T-cell (primary cell): ENCODE measurements at regions of chr5 and their contacts with region 1.

Region 1: DNA sequence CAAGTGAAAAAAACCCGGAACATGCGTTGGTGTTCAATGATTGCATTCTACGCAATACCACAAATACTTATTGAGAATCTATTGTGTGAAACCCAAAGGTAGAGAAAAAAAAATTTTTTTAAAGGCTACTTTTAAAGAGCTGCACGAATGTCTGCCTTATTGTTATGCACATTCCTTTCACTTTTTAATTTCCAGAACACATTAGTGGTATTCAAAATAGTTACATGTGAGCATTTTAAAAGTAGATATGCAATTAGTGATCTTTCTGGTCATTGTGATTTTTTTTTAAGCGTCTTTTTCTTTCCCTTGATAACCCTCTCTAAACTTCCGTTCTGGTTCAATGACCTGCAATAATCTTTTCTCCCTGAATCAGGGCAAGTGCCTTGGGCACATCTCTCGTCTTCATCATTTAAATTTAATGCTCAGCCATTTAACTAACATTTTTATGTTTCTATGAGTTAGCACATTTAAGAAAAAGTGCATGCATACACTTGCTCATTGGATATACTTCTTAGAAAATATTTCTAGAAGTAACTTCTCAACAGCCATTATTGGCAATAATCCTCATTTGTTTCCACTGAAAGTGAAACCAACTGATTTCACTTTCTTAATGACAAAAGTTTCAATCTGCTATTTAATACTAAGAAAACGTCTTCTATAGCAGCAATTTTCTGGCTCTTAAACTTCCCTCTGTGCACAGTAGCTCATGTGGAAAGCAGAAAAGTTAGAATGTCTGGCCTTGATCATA is 80.3 kb downstream of the CDH6 start:
- DNase-seq: no peak
- ATAC-seq: no peak
- H3K4me3 ChIP-seq: no peak overlapping the region
- H3K4me3 Mint-ChIP-seq: no peak overlapping the region
- H3K27ac ChIP-seq: no peak overlapping the region
- H3K27ac Mint-ChIP-seq: no peak overlapping the region
- H3K4me1 ChIP-seq: no peaks in the 10 kb centered on the region
- H3K4me1 Mint-ChIP-seq: no peaks in the 10 kb centered on the region
- H3K27me3 ChIP-seq: peaks cover 0 to 3% of the 10 kb centered on the region in 2 experiments
- H3K27me3 Mint-ChIP-seq: no peaks in the 10 kb centered on the region

Region 2: GRCh38 chr5:31329715-31330114 is 55.9 kb after region 1 on chr5:
- CTCF ChIA-PET with region 1: no interaction called
- POLR2A ChIA-PET with region 1: interaction called in 1 of 2 experiments, 10 read pairs
- DNase-seq: no peak
- ATAC-seq: no peak
- H3K4me3 ChIP-seq: no peak overlapping the region
- H3K4me3 Mint-ChIP-seq: no peak overlapping the region
- H3K27ac ChIP-seq: no peak overlapping the region
- H3K27ac Mint-ChIP-seq: no peak overlapping the region
- H3K4me1 ChIP-seq: no peaks in the 10 kb centered on the region
- H3K4me1 Mint-ChIP-seq: no peaks in the 10 kb centered on the region
- H3K27me3 ChIP-seq: no peaks in the 10 kb centered on the region
- H3K27me3 Mint-ChIP-seq: peaks cover 0 to 5% of the 10 kb centered on the region in 2 donors